ENCODE measurements at regions of chr18 and their contacts with region 1.

Region 1: DNA sequence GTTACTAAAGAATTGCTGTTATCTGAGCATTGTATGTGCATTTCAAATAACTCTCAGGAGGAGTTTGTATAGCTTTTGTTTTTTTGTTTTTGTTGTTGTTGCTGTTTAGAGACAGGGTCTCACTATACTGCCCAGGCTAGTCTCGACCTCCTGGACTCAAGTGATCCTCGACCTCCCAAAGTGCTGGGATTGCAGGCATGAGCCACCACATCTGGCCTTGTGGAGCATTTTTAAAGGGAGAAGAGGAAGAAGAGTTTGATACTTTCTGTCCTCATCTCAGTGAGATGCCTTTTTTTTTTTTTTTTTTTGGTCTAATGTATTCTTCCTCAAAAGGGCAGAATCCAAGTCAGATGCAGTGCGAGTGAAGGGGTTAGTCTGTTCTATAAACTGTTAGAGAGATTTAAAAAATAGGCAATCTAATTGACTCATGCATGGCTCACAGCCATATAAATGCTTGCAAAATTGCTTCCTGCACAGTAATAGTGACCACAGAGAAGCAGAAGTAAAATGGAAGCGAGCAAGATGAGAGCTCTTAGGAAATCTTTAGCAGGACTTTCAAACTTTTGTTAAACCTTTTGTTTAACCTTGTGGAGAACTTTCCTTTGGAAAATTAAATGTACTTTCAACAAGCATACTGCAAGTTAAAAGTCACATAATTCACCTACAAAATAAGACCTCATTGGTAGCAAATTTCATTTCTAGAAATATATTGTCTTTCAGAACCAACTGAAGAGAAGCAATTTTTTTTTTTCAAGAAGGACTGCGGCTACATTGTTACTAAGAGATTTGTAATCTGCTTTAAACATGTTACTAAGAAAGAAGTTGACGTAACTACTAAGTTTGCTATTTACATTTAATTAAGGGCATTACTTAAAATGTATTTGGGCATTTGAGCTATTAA is 52.3 kb upstream of the ROCK1 start:
- H3K4me3 Mint-ChIP-seq: peak overlapping the region; percentile 48
- H3K27ac Mint-ChIP-seq: peak overlapping the region; percentile 91
- H3K4me1 Mint-ChIP-seq: peaks cover 29% of the 10 kb centered on the region
- H3K27me3 Mint-ChIP-seq: no peaks in the 10 kb centered on the region

Region 2: GRCh38 chr18:21117409-21118131 is 46.3 kb before region 1 on chr18:
- intact Hi-C with region 1: loop called (anchors 5 kb)
- H3K4me3 Mint-ChIP-seq: peak overlapping the region; percentile 37
- H3K27ac Mint-ChIP-seq: peak overlapping the region; percentile 93
- H3K4me1 Mint-ChIP-seq: peaks cover 20% of the 10 kb centered on the region
- H3K27me3 Mint-ChIP-seq: no peaks in the 10 kb centered on the region

Region 3: DNA sequence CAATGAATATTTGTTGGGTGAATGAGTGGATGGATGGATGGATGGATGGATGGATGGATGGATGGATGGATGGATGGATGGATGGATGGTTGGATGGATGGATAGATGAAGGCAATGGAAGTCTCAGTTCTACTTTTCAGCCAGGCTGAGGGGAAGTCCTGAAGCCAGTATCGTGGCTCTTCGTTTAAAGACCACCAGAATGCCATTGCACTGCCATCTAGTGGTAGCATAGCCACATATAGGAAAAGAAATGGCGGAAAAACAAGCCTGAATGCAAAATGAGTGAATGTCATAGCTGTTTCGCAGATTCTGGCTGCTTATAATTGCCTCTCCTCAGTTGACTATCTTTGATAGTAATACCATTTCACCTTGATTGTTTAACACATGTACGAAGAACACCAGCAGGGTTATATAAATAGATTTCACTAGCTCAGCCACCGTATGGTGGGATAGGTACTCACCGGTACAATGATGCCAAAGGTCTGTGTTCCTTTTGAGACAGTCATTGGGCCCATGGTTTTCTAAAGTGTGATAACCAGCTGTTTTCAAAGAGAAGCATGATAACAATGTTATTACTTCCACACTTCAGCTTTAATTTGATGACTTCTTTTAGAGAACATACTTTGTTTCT is 15.8 kb after region 1 on chr18:
- intact Hi-C with region 1: loop called (anchors 2 kb)
- H3K4me3 Mint-ChIP-seq: no peak overlapping the region
- H3K27ac Mint-ChIP-seq: no peak overlapping the region
- H3K4me1 Mint-ChIP-seq: peaks cover 23% of the 10 kb centered on the region
- H3K27me3 Mint-ChIP-seq: no peaks in the 10 kb centered on the region